ENCODE measurements at regions of chr6 and their contacts with region 1.

Region 1: DNA sequence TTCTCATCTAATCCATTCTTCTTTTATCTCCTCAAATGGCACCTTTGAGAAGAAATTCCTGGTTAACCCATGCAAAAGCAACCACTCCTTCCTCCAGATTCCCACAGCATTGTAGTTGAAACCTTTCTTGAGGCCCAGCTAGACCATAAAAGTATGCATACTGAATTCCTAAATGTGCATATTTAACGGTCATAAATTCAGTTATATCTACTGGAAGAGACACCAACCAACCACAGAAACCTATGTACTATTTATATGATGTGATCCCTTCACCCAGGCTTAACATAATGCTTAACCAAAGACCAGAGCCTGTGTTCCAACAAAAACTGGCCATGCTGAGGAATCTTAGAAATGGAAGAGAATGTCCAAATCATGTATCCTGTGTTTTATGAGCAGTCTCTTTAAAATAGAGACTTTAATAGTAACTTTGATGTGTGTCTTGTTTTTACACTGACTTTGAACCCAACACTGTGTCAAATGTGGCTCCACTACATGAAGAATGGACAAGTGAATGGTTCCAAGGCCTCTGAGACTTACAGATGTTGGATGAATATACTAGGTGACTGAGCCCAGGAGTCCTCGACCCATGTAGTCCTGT is 11.4 kb upstream of the TAF8 start:
- DNase-seq: no peak
- H3K4me3 Mint-ChIP-seq: peak overlapping the region; percentile 81
- H3K27ac Mint-ChIP-seq: peak overlapping the region; percentile 94
- H3K4me1 Mint-ChIP-seq: peaks cover 61% of the 10 kb centered on the region
- H3K27me3 Mint-ChIP-seq: no peaks in the 10 kb centered on the region

Region 2: DNA sequence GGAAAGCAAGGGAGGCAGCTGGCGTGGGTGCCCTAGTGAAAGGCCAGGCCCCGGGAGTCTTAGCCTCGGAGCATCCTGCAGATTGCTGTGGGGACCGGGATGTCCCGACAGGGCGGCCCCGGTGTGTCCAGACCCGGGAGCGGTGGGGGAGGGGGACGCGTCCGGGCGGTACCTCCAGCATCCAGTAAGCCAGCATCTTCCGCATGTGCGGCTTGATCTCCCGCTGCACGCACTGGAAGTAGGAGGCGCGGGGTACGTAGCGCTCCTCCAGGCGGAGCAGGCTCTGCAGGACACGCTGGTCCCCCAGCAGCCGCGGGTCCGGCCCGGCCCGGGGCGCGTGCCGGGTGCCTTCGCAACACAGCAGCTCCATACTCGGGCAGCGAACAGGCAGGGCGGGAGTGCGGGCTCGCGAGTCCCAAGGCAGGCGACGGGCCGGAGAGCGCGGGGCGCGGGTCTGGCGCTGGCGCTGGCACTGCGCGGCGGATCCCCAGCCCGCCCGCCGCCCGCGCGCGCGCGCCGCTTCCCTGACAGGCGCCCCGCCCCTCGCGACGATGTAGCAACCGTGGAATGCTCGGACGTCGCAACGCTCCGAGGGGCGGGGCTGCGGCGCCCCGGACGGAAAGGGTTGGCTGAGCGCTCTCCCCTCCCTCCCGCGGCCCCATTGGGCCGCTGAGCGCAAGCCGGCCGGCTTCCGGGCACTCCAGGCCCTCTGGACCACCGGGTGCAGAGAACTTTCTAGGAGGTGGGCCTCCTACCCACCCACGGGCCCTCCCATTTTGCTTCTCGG is 97.4 kb before region 1 on chr6 and contains the start of gene CCND3:
- intact Hi-C with region 1: loop called (anchors 1 kb)
- DNase-seq: peak; percentile 89
- H3K4me3 Mint-ChIP-seq: peak within 1 kb of the TSS; percentile 99
- H3K27ac Mint-ChIP-seq: peak within 1 kb of the TSS; percentile 94
- H3K4me1 Mint-ChIP-seq: peaks cover 43% of the 10 kb centered on the region
- H3K27me3 Mint-ChIP-seq: no peaks in the 10 kb centered on the region
- total RNA-seq, gene CCND3: 351 and 356 TPM in 2 replicates

Region 3: GRCh38 chr6:41976794-41977484 is 62.0 kb before region 1 on chr6:
- intact Hi-C with region 1: loop called (anchors 1 kb)
- DNase-seq: no peak
- H3K4me3 Mint-ChIP-seq: no peak overlapping the region
- H3K27ac Mint-ChIP-seq: peak overlapping the region; percentile 84
- H3K4me1 Mint-ChIP-seq: peaks cover 39% of the 10 kb centered on the region
- H3K27me3 Mint-ChIP-seq: no peaks in the 10 kb centered on the region

Region 4: GRCh38 chr6:42009966-42010891 is 28.7 kb before region 1 on chr6:
- intact Hi-C with region 1: loop called (anchors 2 kb)
- DNase-seq: no peak
- H3K4me3 Mint-ChIP-seq: peak overlapping the region; percentile 37
- H3K27ac Mint-ChIP-seq: peak overlapping the region; percentile 87
- H3K4me1 Mint-ChIP-seq: peaks cover 72% of the 10 kb centered on the region
- H3K27me3 Mint-ChIP-seq: no peaks in the 10 kb centered on the region

Region 5: DNA sequence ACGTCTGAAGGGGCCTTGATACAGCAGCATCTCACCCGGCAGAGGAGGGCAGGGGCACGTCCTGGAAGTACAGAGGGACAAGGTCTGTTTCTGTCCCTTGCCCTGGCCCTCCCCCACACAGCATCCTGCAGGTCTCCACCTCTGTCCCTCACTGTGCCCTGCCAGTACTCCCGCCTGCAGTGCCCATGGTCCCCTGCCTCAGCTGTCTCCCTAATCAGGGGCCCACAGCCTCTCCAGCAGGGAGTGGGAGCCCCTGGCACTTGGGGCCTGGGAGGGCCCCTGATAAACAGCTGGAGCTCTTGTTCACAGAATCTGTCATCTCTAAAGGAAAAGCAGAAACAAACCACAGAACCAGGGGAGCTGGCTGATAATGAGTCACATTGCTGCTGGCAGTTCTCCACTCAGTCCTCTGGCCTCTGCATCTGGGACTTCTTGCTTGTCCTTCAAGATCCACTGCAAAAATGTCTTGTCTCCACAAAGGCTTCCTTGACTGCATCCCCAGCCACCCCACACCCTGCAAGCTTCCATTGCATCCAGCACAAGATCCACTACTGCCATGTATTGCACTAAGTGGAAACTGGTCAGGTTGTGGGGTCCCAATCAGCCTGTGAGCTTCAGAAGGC is 21.8 kb before region 1 on chr6:
- intact Hi-C with region 1: loop called (anchors 1 kb)
- DNase-seq: no peak
- H3K4me3 Mint-ChIP-seq: peak overlapping the region; percentile 69
- H3K27ac Mint-ChIP-seq: peak overlapping the region; percentile 90
- H3K4me1 Mint-ChIP-seq: peaks cover 55% of the 10 kb centered on the region
- H3K27me3 Mint-ChIP-seq: peaks cover 1% of the 10 kb centered on the region

Region 6: DNA sequence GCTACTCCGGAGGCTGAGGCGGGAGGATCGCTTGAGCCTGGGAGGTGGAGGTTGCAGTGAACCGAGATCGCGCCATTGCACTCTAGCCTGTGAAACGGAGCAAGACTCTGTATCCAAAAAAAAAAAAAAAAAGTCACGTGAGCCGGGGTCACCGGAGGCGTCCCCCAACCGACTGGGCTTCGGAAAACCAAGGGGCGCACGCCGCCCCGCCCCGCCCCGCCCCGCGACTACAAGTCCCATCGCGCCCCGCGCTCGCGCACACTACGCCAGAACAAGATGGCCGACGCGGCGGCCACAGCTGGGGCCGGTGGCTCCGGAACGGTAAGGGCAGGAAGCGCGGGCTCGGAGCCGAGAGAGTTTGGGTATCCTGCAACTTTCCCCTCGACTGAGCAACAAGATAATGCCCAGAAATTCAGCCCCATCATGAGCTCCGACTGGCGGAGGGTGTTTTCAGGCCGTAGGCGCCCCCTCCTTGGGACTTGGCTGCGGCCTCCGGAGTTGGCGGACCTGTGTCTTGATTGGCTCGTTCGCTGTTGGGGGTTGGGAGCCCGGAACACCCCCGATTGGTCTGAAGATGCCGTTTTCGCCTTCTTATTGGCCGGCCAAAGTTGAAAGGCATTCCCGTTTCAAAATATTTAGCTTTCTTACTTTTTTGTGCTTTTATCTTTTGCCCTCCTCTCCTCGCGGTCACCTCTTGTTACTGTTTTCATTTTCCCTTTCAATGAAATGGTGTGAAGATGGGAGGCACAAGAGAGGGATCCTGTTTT is 11.5 kb after region 1 on chr6 and contains the start of gene TAF8:
- intact Hi-C with region 1: loop called (anchors 1 kb)
- DNase-seq: peak; percentile 87
- H3K4me3 Mint-ChIP-seq: peak within 1 kb of the TSS; percentile 93
- H3K27ac Mint-ChIP-seq: peak within 1 kb of the TSS; percentile 92
- H3K4me1 Mint-ChIP-seq: peaks cover 58% of the 10 kb centered on the region
- H3K27me3 Mint-ChIP-seq: no peaks in the 10 kb centered on the region
- total RNA-seq, gene TAF8: 36.7 and 38.3 TPM in 2 replicates